Activated naive CD4-positive, alpha-beta T cell treated with anti-CD3 and anti-CD28 coated beads for 36 hours (primary cell): ENCODE measurements at regions of chr2 and their contacts with region 1.

Region 1: DNA sequence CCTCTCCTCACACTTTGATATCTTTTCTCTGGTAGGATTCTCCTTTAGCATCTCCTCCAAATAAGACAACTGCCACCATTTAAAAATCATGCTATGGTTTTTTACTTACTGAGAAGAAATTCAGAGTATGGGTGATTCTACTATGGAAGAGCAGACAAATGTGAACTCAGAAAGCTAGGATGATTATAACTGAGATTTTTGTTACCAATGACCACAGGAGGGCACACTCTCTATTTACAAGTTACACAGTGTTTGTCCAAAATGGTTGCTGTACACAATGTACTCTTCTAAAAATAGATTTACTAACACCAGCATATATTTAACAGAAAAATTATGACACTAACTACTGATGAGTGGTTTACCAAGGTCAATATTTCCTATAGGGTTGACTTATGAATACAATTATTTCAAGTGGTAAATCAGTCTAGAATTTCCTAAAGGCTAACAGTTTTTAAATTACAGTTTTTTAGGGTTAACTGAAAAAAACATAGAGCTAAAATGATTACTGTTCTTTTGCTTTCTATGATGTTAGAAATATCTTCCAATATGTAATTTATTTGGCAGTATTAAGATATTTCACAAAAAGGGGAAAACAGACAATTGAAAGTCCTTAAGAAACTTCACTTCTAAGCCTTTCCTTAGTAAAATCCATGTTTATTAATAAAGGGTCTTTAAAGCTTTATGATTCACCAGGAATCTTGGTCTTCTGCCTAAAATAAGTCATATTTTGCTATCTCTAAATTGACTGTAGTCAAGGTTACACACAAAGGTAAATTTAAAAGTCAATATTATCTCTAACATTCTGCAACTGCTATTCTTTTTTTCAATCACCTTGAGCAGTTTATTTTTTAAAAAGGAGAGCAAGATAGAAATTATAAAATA is 57.2 kb downstream of the MAP4K3 start:
- DNase-seq: no peak
- H3K4me3 Mint-ChIP-seq: no peak overlapping the region
- H3K27ac Mint-ChIP-seq: no peak overlapping the region
- H3K4me1 Mint-ChIP-seq: peaks cover 19% of the 10 kb centered on the region
- H3K27me3 Mint-ChIP-seq: no peaks in the 10 kb centered on the region

Region 2: DNA sequence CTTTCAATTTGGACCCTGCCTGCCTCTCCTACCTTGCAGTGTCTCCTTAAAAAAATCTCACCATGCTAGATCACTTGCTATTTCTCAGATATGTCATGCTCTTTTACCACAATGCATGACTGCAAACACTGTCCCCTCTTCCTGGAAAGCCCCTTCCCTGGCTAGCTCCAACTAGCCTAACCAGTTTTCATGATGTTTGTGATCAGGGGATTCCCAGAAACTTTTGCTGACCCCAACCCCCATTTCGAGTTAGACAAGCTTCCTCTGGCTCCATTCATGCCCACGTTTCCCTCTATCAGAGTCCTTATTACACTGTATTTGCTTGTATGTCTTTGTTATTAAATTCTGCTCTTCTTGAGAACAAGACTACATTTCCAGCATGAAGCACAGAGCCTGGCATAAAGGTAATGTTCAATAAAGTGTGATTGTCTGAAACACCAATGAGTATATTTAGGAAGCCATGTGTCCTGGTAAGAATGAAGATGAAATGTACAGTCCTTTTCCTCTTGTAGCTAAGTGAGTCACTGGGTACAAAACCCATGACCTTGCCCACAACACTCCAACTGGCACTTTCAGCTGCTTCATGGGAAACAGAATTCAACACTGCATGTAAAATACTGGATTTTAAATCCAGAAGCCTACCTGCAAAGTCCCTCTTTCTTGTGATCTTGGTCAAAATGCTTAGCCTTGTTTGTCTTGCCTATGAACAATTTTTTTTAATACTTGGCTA is 940.8 kb before region 1 on chr2:
- CTCF ChIA-PET with region 1: no interaction called
- intact Hi-C with region 1: no loop called
- DNase-seq: peak; percentile 33
- H3K4me3 Mint-ChIP-seq: no peak overlapping the region
- H3K27ac Mint-ChIP-seq: no peak overlapping the region
- H3K4me1 Mint-ChIP-seq: peaks cover 8% of the 10 kb centered on the region
- H3K27me3 Mint-ChIP-seq: peaks cover 6% of the 10 kb centered on the region

Region 3: GRCh38 chr2:39403311-39403710 is 23.4 kb after region 1 on chr2:
- CTCF ChIA-PET with region 1: interaction called, 3 read pairs
- intact Hi-C with region 1: loop called (anchors 2 kb)
- DNase-seq: peak; percentile 12
- H3K4me3 Mint-ChIP-seq: no peak overlapping the region
- H3K27ac Mint-ChIP-seq: no peak overlapping the region
- H3K4me1 Mint-ChIP-seq: peaks cover 64% of the 10 kb centered on the region
- H3K27me3 Mint-ChIP-seq: no peaks in the 10 kb centered on the region

Region 4: GRCh38 chr2:39469807-39470206 is 89.9 kb after region 1 on chr2:
- CTCF ChIA-PET with region 1: interaction called, 3 read pairs
- intact Hi-C with region 1: loop called (anchors 1 kb)
- DNase-seq: peak; percentile 39
- H3K4me3 Mint-ChIP-seq: no peak overlapping the region
- H3K27ac Mint-ChIP-seq: no peak overlapping the region
- H3K4me1 Mint-ChIP-seq: peaks cover 34% of the 10 kb centered on the region
- H3K27me3 Mint-ChIP-seq: no peaks in the 10 kb centered on the region

Region 5: GRCh38 chr2:39530411-39530866 is 150.6 kb after region 1 on chr2:
- CTCF ChIA-PET with region 1: no interaction called
- intact Hi-C with region 1: loop called (anchors 5 kb)
- DNase-seq: no peak
- H3K4me3 Mint-ChIP-seq: no peak overlapping the region
- H3K27ac Mint-ChIP-seq: no peak overlapping the region
- H3K4me1 Mint-ChIP-seq: no peaks in the 10 kb centered on the region
- H3K27me3 Mint-ChIP-seq: no peaks in the 10 kb centered on the region